Dendritic cell treated with granulocyte-macrophage colony-stimulating factor and Interleukin-4, amounts not matched to agents 40 ng/mL and 50 ng/mL, for 4 days (primary cell): ENCODE measurements at regions of chr15 and their contacts with region 1.

Region 1: GRCh38 chr15:66946578-66947164 is 118.7 kb upstream of the SMAD3 start:
- H3K4me3 Mint-ChIP-seq: no peak overlapping the region
- H3K27ac Mint-ChIP-seq: no peak overlapping the region
- H3K4me1 Mint-ChIP-seq: peaks cover 69% of the 10 kb centered on the region
- H3K27me3 Mint-ChIP-seq: peaks cover 32% of the 10 kb centered on the region

Region 2: GRCh38 chr15:66830358-66830757 is 116.3 kb before region 1 on chr15:
- intact Hi-C with region 1: no loop called
- H3K4me3 Mint-ChIP-seq: no peak overlapping the region
- H3K27ac Mint-ChIP-seq: no peak overlapping the region
- H3K4me1 Mint-ChIP-seq: peaks cover 49% of the 10 kb centered on the region
- H3K27me3 Mint-ChIP-seq: peaks cover 2% of the 10 kb centered on the region

Region 3: GRCh38 chr15:67080900-67081431 is 134.3 kb after region 1 on chr15:
- intact Hi-C with region 1: loop called (anchors 5 kb)
- H3K4me3 Mint-ChIP-seq: peak overlapping the region; percentile 15
- H3K27ac Mint-ChIP-seq: peak overlapping the region; percentile 32
- H3K4me1 Mint-ChIP-seq: peaks cover 85% of the 10 kb centered on the region
- H3K27me3 Mint-ChIP-seq: peaks cover 11% of the 10 kb centered on the region

Region 4: DNA sequence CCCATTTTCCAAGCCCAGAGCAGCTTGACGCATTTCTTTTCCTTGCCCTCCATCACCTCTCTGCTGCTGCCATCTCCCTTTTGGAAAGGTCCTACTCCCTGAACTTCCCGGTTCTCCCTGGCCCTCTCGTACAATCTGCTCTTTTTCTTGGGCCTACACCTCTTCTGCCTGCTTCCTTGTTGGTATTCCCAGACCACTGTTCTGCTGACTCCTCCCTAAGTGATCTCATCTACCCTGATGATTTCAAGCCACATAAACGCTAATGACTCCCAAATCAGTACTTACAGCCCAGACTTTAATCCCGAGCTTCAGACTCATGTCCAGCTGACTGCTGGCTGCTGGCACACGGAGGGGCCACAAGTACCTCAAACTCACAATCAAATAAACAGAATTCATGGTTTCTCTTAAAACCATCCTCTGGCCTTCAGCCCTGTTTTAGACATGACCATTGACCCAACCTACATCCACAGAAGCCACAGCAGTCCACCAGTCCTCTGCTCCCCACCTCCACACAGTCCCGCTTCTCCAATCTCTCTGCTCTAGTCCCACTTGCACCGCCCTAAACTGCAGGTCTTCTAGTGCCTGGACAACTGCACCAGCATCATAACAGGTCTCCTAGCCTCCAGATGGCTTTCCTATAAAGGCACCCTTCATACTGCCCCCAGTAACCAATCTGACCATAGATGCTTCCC is 250.1 kb after region 1 on chr15:
- intact Hi-C with region 1: loop called (anchors 10 kb)
- H3K4me3 Mint-ChIP-seq: no peak overlapping the region
- H3K27ac Mint-ChIP-seq: no peak overlapping the region
- H3K4me1 Mint-ChIP-seq: peaks cover 15% of the 10 kb centered on the region
- H3K27me3 Mint-ChIP-seq: no peaks in the 10 kb centered on the region

Region 5: DNA sequence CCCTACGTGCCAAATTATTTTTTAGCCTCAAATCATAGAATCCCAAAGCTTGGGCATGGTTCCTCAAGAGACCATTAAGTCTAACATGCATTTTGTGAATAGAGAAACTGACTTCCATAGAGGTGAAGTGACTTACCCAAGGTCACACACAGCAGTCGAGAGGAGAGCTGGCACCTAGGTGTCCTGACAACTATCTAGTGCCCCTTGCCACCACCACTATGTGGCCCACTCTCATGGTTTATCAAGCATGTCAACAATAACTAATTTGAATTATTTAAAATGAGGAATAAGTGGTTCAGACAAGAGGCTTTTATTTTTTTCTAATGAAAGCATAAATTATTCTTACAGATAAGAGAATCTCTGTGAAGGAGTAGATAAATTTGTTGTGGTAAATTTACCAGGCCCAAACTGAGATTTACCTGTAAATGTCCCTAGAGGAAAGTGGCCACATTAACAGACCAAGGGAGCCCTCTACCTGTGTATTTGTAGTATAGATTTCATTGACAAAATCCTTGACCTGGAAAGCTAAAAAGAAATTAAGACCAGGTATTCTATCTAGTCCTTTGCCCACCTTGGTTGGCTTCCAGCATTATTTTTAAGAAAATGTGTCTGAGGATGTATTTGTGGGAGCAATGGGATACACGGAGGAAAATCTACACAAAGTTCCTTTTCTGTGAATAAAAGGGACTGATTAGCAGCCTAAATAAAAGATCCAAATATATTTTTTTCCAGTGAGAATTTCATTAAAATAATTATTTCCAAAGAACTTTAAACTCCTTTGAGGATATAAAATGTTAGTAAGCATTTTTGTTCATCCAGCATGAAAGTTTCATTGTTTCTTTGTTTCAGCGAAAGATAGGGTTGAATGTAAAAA is 357.1 kb after region 1 on chr15:
- intact Hi-C with region 1: loop called (anchors 2 kb)
- H3K4me3 Mint-ChIP-seq: no peak overlapping the region
- H3K27ac Mint-ChIP-seq: no peak overlapping the region
- H3K4me1 Mint-ChIP-seq: no peaks in the 10 kb centered on the region
- H3K27me3 Mint-ChIP-seq: no peaks in the 10 kb centered on the region

Region 6: GRCh38 chr15:67433495-67434099 is 486.9 kb after region 1 on chr15:
- intact Hi-C with region 1: loop called (anchors 1 kb)
- H3K4me3 Mint-ChIP-seq: no peak overlapping the region
- H3K27ac Mint-ChIP-seq: no peak overlapping the region
- H3K4me1 Mint-ChIP-seq: no peaks in the 10 kb centered on the region
- H3K27me3 Mint-ChIP-seq: no peaks in the 10 kb centered on the region

Region 7: DNA sequence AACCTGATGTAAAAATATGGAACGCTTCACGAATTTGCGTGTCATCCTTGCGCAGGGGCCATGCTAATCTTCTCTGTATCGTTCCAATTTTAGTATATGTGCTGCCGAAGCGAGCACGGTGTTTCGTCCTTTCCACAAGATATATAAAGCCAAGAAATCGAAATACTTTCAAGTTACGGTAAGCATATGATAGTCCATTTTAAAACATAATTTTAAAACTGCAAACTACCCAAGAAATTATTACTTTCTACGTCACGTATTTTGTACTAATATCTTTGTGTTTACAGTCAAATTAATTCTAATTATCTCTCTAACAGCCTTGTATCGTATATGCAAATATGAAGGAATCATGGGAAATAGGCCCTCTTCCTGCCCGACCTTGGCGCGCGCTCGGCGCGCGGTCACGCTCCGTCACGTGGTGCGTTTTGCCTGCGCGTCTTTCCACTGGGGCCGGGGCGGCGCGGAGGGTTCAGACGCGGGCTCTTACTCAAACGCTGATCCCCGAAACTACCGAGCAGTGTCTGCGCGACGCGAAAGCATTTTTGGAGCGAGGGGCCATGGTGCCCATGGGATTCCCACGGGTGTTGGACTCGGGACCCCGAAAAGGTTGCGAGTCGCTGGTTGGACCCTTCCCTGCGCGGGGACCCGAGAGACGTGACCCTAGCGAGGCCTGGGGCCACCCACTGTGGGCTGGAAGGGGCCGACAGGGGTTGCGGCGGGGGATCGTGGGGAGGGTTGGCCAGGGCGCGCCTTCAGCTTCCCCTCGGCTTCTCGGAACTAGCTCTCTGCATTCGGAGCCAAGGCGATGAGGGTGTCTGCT is 893.5 kb after region 1 on chr15 and contains the start of gene RNU6-1:
- intact Hi-C with region 1: loop called (anchors 10 kb)
- H3K4me3 Mint-ChIP-seq: peak within 1 kb of the TSS; percentile 75
- H3K27ac Mint-ChIP-seq: peak within 1 kb of the TSS; percentile 83
- H3K4me1 Mint-ChIP-seq: peaks cover 49% of the 10 kb centered on the region
- H3K27me3 Mint-ChIP-seq: peaks cover 17% of the 10 kb centered on the region